ENCODE measurements at regions of chr2 and their contacts with region 1.

Region 1: DNA sequence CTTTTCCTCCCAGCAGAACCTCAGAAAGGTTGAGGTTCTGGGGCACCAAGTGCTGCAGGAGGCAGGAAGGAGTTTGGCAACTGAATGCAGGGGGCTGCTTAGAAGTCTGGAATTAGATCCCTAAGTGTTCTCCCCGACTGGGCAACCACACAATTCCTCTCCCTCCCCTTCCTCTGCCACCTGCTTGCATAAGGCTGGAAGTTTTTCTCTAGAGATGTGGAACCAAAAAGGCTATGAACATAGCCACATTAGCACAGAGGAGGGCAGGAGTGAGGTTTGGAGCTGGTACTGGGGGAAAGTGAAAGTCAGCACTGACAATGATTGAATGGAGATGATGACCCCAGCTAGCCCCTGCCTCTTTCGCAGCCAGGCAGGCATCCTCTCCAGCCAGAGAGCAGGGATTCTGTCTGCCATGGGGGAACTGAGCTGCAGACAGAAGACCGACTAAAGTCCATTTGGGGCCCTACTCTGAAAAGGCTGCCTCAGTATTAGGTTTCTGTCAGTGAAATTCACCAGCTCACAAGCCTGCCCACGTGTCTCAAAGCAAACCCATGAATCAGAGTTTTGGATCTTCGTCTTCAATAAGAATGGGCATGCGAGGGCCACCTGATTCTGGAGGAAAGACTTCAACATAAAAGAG is 87.9 kb upstream of the ITGA6 start:
- DNase-seq: no peak
- H3K4me3 ChIP-seq: no peak overlapping the region
- H3K27ac ChIP-seq: peak overlapping the region; percentile 76 to 88 (median 84)
- H3K4me1 ChIP-seq: peaks cover 22 to 72% (median 48%) of the 10 kb centered on the region in 4 donors
- H3K27me3 ChIP-seq: no peaks in the 10 kb centered on the region
- CTCF ChIP-seq: no peak
- EP300 ChIP-seq: no peak
- POLR2A ChIP-seq: no peak

Region 2: GRCh38 chr2:172456002-172456401 is 116.5 kb after region 1 on chr2:
- in situ Hi-C with region 1: loop called in 1 of 4 experiments (anchors 10 kb)
- intact Hi-C with region 1: no loop called
- DNase-seq: peak; percentile 61
- H3K4me3 ChIP-seq: no peak overlapping the region
- H3K27ac ChIP-seq: peak overlapping the region; percentile 48 to 62 (median 55)
- H3K4me1 ChIP-seq: peaks cover 9 to 62% (median 42%) of the 10 kb centered on the region in 4 donors
- H3K27me3 ChIP-seq: no peaks in the 10 kb centered on the region
- CTCF ChIP-seq: peak in 3 of 5 experiments; percentile 9 to 42 (median 10)
- EP300 ChIP-seq: no peak
- POLR2A ChIP-seq: no peak